Activated naive CD4-positive, alpha-beta T cell treated with anti-CD3 and anti-CD28 coated beads, Interleukin-2, amount 10 ng/mL, durations not matched to agents 7 days and 5 days (primary cell): ENCODE measurements at regions of chr21 and their contacts with region 1.

Region 1: GRCh38 chr21:33199516-33200217 is 30.1 kb upstream of the IFNAR2 start:
- DNase-seq: peak; percentile 88
- H3K4me3 Mint-ChIP-seq: no peak overlapping the region
- H3K27ac Mint-ChIP-seq: no peak overlapping the region
- H3K4me1 Mint-ChIP-seq: peaks cover 27% of the 10 kb centered on the region
- H3K27me3 Mint-ChIP-seq: peaks cover 23% of the 10 kb centered on the region

Region 2: GRCh38 chr21:32834916-32835235 is 364.8 kb before region 1 on chr21:
- CTCF ChIA-PET with region 1: interaction called, 11 read pairs
- DNase-seq: no peak
- H3K4me3 Mint-ChIP-seq: no peak overlapping the region
- H3K27ac Mint-ChIP-seq: no peak overlapping the region
- H3K4me1 Mint-ChIP-seq: no peaks in the 10 kb centered on the region
- H3K27me3 Mint-ChIP-seq: peaks cover 15% of the 10 kb centered on the region

Region 3: DNA sequence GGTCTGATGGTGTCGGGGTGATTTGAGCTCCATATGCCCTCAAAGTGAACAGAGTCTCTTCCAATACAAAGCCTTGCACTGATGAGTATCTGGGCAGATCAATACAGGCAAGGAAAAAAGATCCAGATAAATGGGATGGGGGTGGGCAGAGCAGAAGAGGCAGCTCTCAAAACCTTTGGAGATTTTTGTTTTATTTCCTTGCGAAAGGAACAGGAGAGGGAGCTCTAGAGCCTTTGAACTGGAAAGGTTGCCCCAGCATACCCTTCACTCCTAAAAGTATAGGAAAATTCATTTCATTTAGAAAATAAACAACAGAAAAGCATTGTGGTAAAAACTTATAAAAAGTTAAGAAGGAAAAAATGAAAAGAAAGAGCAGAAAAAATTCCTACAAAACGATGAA is 205.4 kb before region 1 on chr21:
- CTCF ChIA-PET with region 1: interaction called, 16 read pairs
- DNase-seq: no peak
- H3K4me3 Mint-ChIP-seq: no peak overlapping the region
- H3K27ac Mint-ChIP-seq: no peak overlapping the region
- H3K4me1 Mint-ChIP-seq: no peaks in the 10 kb centered on the region
- H3K27me3 Mint-ChIP-seq: peaks cover 24% of the 10 kb centered on the region

Region 4: GRCh38 chr21:33063907-33064622 is 135.6 kb before region 1 on chr21:
- CTCF ChIA-PET with region 1: no interaction called
- DNase-seq: no peak
- H3K4me3 Mint-ChIP-seq: no peak overlapping the region
- H3K27ac Mint-ChIP-seq: no peak overlapping the region
- H3K4me1 Mint-ChIP-seq: peaks cover 6% of the 10 kb centered on the region
- H3K27me3 Mint-ChIP-seq: peaks cover 88% of the 10 kb centered on the region

Region 5: DNA sequence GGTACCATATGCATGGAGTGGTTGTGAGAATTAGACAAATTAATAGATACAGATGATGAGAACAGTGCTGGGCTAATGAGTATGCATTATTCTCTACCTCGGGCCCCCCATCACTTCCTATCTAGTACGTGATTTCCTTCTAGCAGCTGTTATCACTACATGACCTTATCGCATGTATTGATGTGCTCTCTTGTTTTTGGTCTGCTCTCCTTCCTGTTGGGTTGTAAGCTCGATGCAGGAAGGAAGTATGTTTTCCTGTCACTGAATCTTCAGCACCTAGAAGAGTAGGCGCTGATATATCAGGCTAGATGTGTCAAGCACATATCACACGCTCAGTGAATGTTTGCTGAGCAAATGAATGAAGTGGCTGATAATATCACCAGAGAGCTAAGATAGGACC is 13.8 kb before region 1 on chr21:
- CTCF ChIA-PET with region 1: interaction called, 13 read pairs
- DNase-seq: peak; percentile 36
- H3K4me3 Mint-ChIP-seq: peak overlapping the region; percentile 34
- H3K27ac Mint-ChIP-seq: peak overlapping the region; percentile 93
- H3K4me1 Mint-ChIP-seq: peaks cover 51% of the 10 kb centered on the region
- H3K27me3 Mint-ChIP-seq: peaks cover under 1% of the 10 kb centered on the region

Region 6: GRCh38 chr21:33278721-33279120 is 79.1 kb after region 1 on chr21:
- CTCF ChIA-PET with region 1: no interaction called
- DNase-seq: no peak
- H3K4me3 Mint-ChIP-seq: no peak overlapping the region
- H3K27ac Mint-ChIP-seq: no peak overlapping the region
- H3K4me1 Mint-ChIP-seq: peaks cover 12% of the 10 kb centered on the region
- H3K27me3 Mint-ChIP-seq: no peaks in the 10 kb centered on the region

Region 7: DNA sequence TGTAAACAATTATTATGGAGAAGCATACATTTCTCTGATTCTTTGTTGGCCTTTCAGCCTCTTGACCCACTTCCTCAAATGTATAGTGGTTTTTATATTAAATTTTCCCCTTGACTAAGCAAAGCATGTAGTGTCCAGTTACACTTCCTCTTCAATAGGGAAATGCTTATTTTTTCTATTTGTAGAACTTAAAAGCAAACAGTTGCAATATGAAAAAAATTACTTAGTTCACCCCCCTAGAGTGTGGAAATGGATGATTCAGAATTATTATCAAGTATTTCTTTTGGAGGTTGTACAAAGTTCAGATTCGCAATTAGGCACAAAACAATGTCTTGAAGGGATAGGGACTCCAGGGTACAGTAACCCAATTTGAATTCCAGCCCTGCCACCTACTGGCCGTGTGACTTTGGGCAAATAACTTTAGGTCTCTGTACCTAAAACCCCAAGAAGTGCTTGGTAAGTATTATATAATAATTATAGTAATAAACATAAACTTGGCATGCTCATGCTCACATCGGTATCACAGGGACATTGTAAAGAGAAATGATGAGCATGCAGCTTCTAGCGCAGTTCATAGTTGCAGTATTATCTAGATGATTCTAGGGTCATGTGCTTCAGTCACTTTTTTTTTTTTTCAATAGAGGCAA is 174.9 kb after region 1 on chr21:
- CTCF ChIA-PET with region 1: interaction called, 30 read pairs
- DNase-seq: peak; percentile 78
- H3K4me3 Mint-ChIP-seq: no peak overlapping the region
- H3K27ac Mint-ChIP-seq: no peak overlapping the region
- H3K4me1 Mint-ChIP-seq: peaks cover 19% of the 10 kb centered on the region
- H3K27me3 Mint-ChIP-seq: peaks cover 61% of the 10 kb centered on the region

Region 8: DNA sequence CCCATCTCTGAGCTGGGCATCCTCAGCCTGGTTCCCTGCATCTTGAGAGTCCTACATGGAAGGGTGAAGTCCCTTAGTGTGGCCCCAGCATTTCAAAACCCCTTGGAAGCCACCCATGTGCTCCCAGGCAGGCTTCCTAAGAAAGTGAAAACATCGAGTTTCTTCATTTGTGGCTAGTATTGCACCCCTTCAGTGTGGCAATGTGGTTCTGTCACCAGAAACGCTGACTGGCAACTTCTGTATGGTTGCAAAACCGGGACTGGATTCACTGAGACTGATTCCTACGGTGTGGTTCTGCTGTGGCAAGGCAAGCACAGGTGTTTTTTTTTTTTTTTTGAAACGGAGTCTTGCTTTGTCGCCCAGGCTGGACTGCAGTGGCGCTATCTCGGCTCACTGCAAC is 194.6 kb after region 1 on chr21:
- CTCF ChIA-PET with region 1: no interaction called
- DNase-seq: no peak
- H3K4me3 Mint-ChIP-seq: no peak overlapping the region
- H3K27ac Mint-ChIP-seq: no peak overlapping the region
- H3K4me1 Mint-ChIP-seq: peaks cover 8% of the 10 kb centered on the region
- H3K27me3 Mint-ChIP-seq: peaks cover 91% of the 10 kb centered on the region